Mucosa of descending colon (tissue), 3 donors: ENCODE measurements at regions of chr7 and their contacts with region 1.

Region 1: DNA sequence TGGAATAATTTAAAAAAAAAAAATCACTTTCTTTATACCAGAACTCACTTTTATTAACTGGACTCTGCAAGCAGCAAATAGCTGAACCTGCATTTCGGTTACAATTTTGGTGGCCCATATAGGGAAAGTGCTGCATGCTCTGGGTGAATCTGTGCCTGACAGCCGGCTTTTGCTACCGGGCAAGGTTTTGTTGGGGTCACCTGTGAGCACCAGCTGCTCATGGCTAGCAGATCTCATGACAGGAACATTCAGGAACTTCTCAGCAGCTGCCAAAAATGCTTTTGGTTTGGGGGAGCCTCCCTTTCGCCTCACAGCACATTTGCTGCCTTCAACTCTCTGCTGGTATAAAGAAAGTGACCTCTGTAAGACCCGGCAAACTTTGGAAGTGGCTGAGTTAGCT is 13.2 kb upstream of the CREB3L2 start:
- DNase-seq: no peak
- ATAC-seq: no peak
- H3K4me3 ChIP-seq: no peak overlapping the region
- H3K4me1 ChIP-seq: no peaks in the 10 kb centered on the region
- CTCF ChIP-seq: no peak

Region 2: DNA sequence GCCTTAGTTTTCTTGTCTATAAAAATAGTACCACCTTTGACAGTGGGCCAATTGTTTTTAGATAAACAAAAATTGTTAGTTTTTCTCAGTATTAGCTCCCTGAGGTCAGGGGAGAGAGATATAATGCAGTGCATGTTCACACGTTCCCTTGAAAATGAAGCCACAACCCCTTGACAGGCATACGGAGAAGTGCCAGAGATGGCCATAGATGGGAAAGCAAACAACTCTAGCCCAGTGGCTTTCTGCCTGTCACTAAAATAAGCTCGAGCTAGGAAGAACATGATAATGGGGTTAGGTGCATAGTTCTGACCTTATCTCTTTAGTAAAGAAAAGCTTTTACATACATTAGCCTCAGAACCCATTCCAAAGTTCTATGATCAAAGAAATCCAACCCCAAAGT is 1021.7 kb before region 1 on chr7:
- intact Hi-C with region 1: no loop called
- DNase-seq: no peak
- ATAC-seq: no peak
- H3K4me3 ChIP-seq: no peak overlapping the region
- H3K4me1 ChIP-seq: no peaks in the 10 kb centered on the region
- CTCF ChIP-seq: no peak

Region 3: DNA sequence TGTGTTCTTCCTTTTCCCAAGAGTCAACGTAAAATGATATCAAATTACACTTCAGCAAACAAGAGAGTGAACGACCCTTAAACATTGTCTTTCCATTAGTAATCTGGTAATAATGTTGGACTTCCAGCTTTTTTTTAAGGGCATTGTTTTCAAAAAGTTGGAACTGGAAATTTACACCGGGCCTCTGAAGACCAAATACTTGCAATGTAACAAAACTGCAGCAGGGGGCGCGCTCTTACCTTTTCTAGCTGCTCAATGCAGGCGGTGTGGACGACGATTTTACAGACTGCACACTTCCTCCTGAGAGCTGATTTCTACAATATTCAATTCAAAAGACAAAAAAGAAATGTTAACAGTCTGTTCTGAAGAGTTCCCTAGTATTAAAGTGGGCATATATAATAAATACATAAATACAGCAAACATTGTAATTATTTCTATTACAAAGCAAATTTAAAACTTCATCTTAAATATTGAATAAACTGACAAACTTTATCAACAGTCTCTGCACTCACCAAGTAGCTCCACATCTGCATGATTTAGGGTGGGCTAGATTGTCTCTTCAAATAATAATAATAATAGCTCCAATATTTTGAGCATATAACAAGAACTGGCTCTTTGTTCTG is 358.8 kb before region 1 on chr7:
- intact Hi-C with region 1: loop called in 1 of 2 experiments (anchors 10 kb)
- DNase-seq: peak in 2 of 3 donors; percentile 74 to 88
- ATAC-seq: peak; percentile 81
- H3K4me3 ChIP-seq: no peak overlapping the region
- H3K4me1 ChIP-seq: no peaks in the 10 kb centered on the region
- CTCF ChIP-seq: peak; percentile 58

Region 4: DNA sequence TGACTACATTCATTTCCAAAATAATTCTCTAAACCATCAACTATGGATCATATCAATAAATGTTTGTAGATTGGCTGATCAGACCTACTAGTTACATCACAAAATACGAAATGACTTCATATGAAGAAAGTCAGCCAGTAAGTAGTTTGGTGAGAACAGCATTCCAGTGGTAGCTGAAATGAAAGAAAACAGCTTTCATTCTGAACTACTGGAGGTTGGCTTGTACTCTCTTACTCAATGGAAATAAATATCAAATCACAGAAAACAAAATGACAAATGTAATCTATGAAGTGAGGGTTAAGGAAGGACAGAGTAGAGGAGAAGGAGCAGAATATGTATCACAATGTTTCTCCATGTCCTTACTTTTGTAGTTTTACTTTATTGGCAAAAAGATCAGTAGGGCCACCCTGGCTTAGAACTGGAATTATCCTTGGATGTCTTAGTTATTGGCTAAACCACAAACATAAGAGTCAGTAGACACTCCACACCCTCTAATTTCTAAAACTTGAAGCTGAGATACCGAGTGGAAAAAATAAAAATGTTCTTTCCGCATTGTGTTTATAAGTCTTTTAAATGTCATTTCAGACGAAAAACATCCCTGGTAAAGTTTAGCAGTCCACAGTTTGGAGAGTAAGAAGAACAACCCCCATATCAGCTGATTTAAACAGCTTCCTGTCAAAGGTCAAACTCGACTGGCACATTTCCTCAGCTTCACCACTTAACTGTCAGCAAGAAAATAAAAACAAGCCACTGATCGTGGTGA is 94.3 kb before region 1 on chr7:
- intact Hi-C with region 1: no loop called
- DNase-seq: no peak
- ATAC-seq: no peak
- H3K4me3 ChIP-seq: no peak overlapping the region
- H3K4me1 ChIP-seq: no peaks in the 10 kb centered on the region
- CTCF ChIP-seq: no peak